HCT116 (cell line): ENCODE measurements at regions of chr1 and their contacts with region 1.

Region 1: DNA sequence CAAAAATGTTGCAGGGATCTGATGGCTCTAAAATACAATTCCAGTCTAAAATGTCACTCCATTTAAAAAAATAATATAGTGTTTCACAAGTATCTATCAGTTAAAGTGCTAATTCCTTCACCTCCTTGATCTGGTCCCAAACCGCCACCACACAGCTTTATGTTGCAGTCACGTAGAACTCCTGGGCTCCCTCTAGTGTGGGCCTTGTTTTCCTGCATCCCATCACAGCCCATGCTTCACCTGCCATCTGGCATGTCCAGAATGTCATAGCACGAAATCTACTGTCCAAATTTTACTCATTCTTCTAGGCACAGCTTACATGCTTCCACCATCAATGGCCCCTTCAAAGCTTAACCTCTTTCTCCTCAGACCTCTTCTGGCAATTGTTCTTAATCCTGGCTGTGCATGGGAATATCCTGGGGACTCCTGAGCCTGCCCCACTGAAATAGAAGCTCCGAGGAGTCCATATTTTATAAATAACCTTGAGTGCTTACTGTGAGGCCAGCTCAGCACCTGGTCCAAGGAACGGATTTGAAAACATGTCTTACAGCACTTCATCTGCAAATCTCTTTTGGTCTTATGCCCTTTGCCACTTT is 15.5 kb downstream of the FYB2 start:
- DNase-seq: peak; percentile 46
- ATAC-seq: peak; percentile 99
- H3K4me3 ChIP-seq: no peak overlapping the region
- H3K27ac ChIP-seq: no peak overlapping the region
- H3K4me1 ChIP-seq: no peaks in the 10 kb centered on the region
- H3K27me3 ChIP-seq: peaks cover 5% of the 10 kb centered on the region; the same call in 1 of the 2 replicates
- CTCF ChIP-seq: peak; percentile 66 to 76 (median 70)
- POLR2A ChIP-seq: no peak
- RAD21 ChIP-seq: peak; percentile 47

Region 2: GRCh38 chr1:56821140-56821797 is 17.6 kb after region 1 on chr1:
- CTCF ChIA-PET with region 1: interaction called, 10 read pairs
- POLR2A ChIA-PET with region 1: no interaction called
- RAD21 ChIA-PET with region 1: no interaction called
- intact Hi-C with region 1: no loop called
- DNase-seq: peak; percentile 51
- ATAC-seq: peak; percentile 97
- H3K4me3 ChIP-seq: no peak overlapping the region
- H3K27ac ChIP-seq: no peak overlapping the region
- H3K4me1 ChIP-seq: no peaks in the 10 kb centered on the region
- H3K27me3 ChIP-seq: peaks cover 5% of the 10 kb centered on the region
- CTCF ChIP-seq: peak; percentile 68 to 98 (median 97); a peak in 5 of 6 replicates
- POLR2A ChIP-seq: no peak
- RAD21 ChIP-seq: peak; percentile 88

Region 3: DNA sequence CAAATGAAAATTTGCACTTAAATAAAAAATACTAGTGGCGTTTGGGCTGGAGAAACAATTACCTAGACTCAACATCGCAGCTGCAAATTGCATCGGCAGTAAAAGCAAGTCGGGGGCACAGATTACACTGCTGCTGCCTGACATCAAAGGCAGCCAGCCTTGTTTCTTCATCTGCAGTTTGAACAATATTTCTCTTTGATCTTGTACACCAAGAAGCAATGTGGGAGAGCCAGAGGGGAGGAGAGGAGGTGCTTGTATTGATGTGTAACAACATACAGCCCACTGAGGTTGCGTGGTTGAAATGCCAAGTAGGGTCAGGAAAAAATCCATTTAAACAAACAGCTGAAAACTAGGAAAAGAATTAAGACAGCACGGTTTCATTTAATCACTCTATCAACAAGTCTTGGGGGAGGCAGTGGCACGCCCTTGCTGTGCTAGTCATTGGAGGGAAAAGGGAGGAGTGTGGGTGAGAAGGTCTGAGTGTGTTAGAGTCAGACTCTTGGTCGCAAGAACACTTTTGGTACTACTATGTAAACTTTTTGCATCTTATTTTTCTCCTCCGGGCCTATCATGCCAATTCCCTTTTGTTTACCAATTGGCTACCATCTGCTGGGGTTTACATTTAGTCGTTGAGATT is 1286.4 kb after region 1 on chr1:
- CTCF ChIA-PET with region 1: no interaction called
- POLR2A ChIA-PET with region 1: no interaction called
- RAD21 ChIA-PET with region 1: no interaction called
- intact Hi-C with region 1: no loop called
- DNase-seq: no peak
- ATAC-seq: no peak
- H3K4me3 ChIP-seq: no peak overlapping the region
- H3K27ac ChIP-seq: no peak overlapping the region
- H3K4me1 ChIP-seq: no peaks in the 10 kb centered on the region
- H3K27me3 ChIP-seq: peaks cover 17% of the 10 kb centered on the region
- CTCF ChIP-seq: no peak
- POLR2A ChIP-seq: no peak
- RAD21 ChIP-seq: no peak